ENCODE measurements at regions of chr18 and their contacts with region 1.

Region 1: GRCh38 chr18:21612125-21612991 is at the start of gene SNRPD1:
- DNase-seq: peak; percentile 98
- H3K4me3 Mint-ChIP-seq: peak within 1 kb of the TSS; percentile 91
- H3K27ac Mint-ChIP-seq: peak within 1 kb of the TSS; percentile 98
- H3K4me1 Mint-ChIP-seq: peaks cover 23% of the 10 kb centered on the region
- H3K27me3 Mint-ChIP-seq: no peaks in the 10 kb centered on the region
- total RNA-seq, gene SNRPD1: 182 and 192 TPM in 2 replicates

Region 2: GRCh38 chr18:21600526-21601410 is 11.6 kb before region 1 on chr18 and contains the start of gene ESCO1:
- intact Hi-C with region 1: loop called (anchors 1 kb)
- DNase-seq: peak; percentile 98
- H3K4me3 Mint-ChIP-seq: peak within 1 kb of the TSS; percentile 94
- H3K27ac Mint-ChIP-seq: peak within 1 kb of the TSS; percentile 95
- H3K4me1 Mint-ChIP-seq: peaks cover 26% of the 10 kb centered on the region
- H3K27me3 Mint-ChIP-seq: no peaks in the 10 kb centered on the region
- total RNA-seq, gene ESCO1: 20.0 and 21.5 TPM in 2 replicates

Region 3: GRCh38 chr18:21682371-21683051 is 70.2 kb after region 1 on chr18:
- intact Hi-C with region 1: loop called (anchors 5 kb)
- DNase-seq: peak; percentile 80
- H3K4me3 Mint-ChIP-seq: no peak overlapping the region
- H3K27ac Mint-ChIP-seq: no peak overlapping the region
- H3K4me1 Mint-ChIP-seq: peaks cover 13% of the 10 kb centered on the region
- H3K27me3 Mint-ChIP-seq: no peaks in the 10 kb centered on the region

Measured in activated CD4-positive, alpha-beta T cell treated with anti-CD3 and anti-CD28 coated beads, Interleukin-2, amount 10 ng/mL, durations not matched to agents 24 days and 14 days (primary cell).